Motor neuron (in vitro differentiated cells): ENCODE measurements at regions of chr10 and their contacts with region 1.

Region 1: DNA sequence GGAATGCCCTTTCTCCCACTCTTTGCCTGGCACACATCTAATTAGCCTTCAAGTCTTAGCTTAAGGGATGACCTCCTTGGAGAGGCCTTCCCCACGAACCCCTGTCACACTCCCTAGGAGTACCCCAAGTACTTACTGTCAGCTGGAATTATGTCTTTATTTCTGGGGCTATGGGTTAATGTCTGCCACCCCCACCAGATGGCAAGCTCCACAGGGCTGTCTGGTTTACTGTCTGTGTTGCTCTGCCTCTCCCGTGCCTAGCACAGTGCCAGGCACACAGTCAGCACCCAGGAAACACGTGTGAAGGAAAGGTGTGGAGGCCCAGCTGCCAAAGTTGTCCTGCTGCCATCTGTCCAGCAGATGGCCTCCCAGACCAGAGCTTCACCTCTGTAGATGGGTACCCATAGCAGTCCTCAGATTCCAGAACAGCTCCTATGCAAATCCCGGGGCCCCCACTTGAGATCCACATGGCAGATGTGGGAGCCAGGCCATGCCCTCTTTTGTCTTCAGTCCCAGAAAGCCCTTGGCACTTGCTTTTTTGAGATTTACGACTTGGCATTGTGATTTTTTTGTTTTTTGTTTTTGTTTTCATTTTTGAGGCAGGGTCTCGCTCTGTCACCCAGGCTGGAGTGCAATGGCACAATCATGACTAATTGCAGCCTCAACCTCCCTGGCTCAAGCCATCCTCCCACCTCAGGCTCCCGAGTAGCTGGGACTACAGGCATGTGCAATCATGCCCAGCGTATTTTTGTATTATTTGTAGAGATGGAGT is 17.2 kb upstream of the PALD1 start:
- ATAC-seq: peak; percentile 41 to 75 (median 52)
- H3K4me3 ChIP-seq: no peak overlapping the region
- H3K27ac ChIP-seq: no peak overlapping the region
- H3K4me1 ChIP-seq: peaks cover 3 to 10% of the 10 kb centered on the region in 2 donors

Region 2: DNA sequence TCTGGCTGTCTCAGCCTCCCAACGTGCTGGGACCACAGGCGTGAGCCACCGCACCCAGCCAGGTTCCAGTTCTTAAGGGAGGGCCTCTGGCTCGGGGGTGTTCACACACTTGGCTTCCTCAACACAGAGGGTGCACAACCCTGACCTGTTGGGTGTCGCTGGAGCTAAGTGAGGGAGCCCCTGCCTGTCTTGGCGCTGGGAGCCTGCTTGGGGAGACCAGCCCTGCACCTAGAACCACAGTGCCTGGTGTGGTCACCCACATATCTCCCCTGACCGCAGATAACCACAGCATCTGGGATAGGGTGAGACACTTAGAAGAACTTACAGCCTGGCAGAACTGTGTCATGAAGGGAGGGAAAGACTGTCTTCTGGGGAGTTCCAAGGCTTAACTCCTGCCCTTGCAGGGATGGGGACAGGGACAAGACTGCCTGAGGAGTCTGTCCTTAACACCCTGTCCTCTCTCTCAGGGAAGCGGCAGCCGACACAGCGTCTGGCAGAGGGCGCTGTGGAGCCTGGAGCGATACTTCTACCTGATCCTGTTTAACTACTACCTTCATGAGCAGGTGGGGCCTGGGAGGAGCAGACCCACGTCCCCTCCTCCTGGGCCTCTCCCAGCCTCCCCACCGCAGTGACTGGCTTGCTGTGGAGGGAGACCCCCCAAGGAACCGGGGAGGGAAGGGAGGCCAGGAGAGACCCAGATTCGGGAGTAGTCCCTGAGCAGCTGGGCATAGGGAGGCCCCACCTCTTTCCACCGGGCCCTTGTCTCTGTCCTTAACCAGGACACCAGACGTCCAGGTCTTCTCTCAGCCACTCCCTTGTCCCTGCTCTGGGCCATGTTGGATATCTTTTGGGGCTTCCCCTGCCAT is 76.2 kb after region 1 on chr10:
- in situ Hi-C with region 1: loop called in 1 of 9 experiments (anchors 10 kb)
- ATAC-seq: peak in 3 of 8 experiments; percentile 9 to 42 (median 21)
- H3K4me3 ChIP-seq: no peak overlapping the region
- H3K27ac ChIP-seq: no peak overlapping the region
- H3K4me1 ChIP-seq: peaks cover 0 to 5% of the 10 kb centered on the region in 2 donors